Activated B cell treated with CpG ODN at 0.5 μM for 24 hours (primary cell): ENCODE measurements at regions of chr10 and their contacts with region 1.

Region 1: DNA sequence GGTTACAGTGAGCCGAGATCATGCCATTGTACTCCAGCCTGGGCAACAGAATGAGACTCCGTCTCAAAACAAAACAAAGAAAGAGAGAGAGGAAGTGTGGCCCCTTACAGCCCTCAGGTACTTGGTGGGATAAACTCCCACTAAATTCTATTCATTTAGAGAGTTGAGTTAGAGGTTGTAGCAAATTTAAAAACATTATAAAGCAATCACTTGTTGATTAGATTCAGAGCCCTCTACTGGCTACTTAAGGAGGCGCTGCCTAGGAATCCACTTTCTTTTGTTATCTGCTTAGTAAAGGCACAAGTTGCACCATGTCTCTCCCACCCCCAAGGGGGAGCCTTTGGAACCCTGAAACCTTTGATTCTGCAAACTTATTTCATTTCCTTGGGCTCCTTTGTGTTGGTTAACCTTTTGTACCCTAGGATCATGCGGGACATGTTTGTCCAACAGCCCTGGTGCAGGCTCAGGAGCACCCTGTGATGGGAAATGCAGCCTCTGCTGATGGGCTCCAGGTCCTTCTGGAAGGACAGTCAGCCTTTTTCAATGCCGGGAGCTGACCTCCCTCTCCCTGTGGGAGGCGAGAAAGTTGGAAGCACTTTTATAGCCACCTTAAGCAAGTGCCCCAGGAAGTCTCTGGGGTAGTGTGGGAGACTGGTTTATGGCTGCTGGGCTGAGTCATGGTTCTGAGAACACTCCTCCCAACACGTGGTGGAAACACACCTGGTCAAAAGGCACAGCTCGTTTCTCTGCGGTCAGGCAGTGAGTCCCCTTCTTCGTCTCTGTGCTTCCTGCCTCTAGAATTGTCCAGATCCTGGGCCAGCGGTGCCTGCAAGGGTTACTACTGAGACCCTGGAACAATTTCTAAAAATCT is 2.3 kb downstream of the HKDC1 start:
- DNase-seq: peak; percentile 29
- ATAC-seq: peak; percentile 85
- H3K4me3 Mint-ChIP-seq: peak overlapping the region; percentile 53
- H3K27ac Mint-ChIP-seq: peak overlapping the region; percentile 68
- H3K4me1 Mint-ChIP-seq: peaks cover 29% of the 10 kb centered on the region
- H3K27me3 Mint-ChIP-seq: no peaks in the 10 kb centered on the region
- CTCF ChIP-seq: no peak

Region 2: GRCh38 chr10:69202332-69202731 is 20.1 kb before region 1 on chr10:
- CTCF ChIA-PET with region 1: no interaction called
- POLR2A ChIA-PET with region 1: interaction called, 5 read pairs
- intact Hi-C with region 1: loop called (anchors 1 kb)
- DNase-seq: no peak
- ATAC-seq: peak; percentile 49
- H3K4me3 Mint-ChIP-seq: peak overlapping the region; percentile 15
- H3K27ac Mint-ChIP-seq: peak overlapping the region; percentile 53
- H3K4me1 Mint-ChIP-seq: peaks cover 26% of the 10 kb centered on the region
- H3K27me3 Mint-ChIP-seq: no peaks in the 10 kb centered on the region
- CTCF ChIP-seq: no peak